ENCODE measurements at regions of chr2 and their contacts with region 1.

Region 1: DNA sequence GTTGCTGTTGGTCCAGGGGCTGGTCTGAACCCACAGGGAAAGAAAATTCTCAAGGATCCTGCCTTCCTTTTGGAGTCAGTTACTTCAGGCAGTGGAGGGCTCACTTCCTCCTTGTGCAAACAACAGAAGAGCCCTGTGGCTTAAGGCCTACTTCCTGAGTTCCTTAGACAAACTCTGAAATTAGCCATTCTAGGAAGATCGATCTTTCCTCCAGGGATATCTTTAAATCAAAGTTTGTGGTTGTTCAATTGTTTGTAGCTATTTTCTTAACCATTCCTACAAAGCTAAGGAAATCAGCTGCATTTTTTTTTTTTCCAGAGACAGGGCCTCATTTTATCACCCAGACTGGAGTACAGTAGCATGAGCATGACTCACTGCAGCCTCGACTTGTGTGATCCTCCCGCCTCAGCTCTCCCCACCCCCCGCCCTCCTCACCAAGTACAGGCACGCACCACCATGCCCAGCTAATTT is 156.0 kb downstream of the TANC1 start:
- DNase-seq: no peak
- H3K4me3 Mint-ChIP-seq: no peak overlapping the region
- H3K27ac Mint-ChIP-seq: peak overlapping the region; percentile 80
- H3K4me1 Mint-ChIP-seq: peaks cover 25% of the 10 kb centered on the region
- H3K27me3 Mint-ChIP-seq: no peaks in the 10 kb centered on the region

Region 2: GRCh38 chr2:158903711-158904443 is 220.6 kb before region 1 on chr2:
- CTCF ChIA-PET with region 1: interaction called, 54 read pairs
- DNase-seq: no peak
- H3K4me3 Mint-ChIP-seq: no peak overlapping the region
- H3K27ac Mint-ChIP-seq: no peak overlapping the region
- H3K4me1 Mint-ChIP-seq: peaks cover 2% of the 10 kb centered on the region
- H3K27me3 Mint-ChIP-seq: peaks cover 11% of the 10 kb centered on the region

Region 3: GRCh38 chr2:159098815-159099455 is 25.5 kb before region 1 on chr2:
- CTCF ChIA-PET with region 1: no interaction called
- DNase-seq: no peak
- H3K4me3 Mint-ChIP-seq: no peak overlapping the region
- H3K27ac Mint-ChIP-seq: no peak overlapping the region
- H3K4me1 Mint-ChIP-seq: peaks cover 27% of the 10 kb centered on the region
- H3K27me3 Mint-ChIP-seq: no peaks in the 10 kb centered on the region

Region 4: DNA sequence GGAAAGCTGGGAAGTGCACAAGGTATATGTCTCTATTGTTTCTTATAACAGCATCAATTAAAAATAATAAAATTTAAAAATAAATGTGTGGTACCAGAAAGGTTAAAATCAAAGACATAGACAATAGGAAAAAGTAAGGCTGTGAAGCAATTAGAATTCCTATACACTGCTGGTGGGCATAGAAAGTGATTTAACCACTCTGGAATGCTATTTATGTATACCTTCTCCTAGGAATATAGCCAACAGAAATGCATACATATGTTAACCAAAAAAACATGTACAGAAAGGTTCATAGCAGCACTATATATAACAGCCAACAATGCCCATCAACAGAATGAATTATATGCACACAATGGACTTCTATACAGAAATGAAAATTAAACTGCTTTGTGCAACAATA is 119.1 kb after region 1 on chr2:
- CTCF ChIA-PET with region 1: no interaction called
- DNase-seq: no peak
- H3K4me3 Mint-ChIP-seq: no peak overlapping the region
- H3K27ac Mint-ChIP-seq: no peak overlapping the region
- H3K4me1 Mint-ChIP-seq: no peaks in the 10 kb centered on the region
- H3K27me3 Mint-ChIP-seq: no peaks in the 10 kb centered on the region

Region 5: DNA sequence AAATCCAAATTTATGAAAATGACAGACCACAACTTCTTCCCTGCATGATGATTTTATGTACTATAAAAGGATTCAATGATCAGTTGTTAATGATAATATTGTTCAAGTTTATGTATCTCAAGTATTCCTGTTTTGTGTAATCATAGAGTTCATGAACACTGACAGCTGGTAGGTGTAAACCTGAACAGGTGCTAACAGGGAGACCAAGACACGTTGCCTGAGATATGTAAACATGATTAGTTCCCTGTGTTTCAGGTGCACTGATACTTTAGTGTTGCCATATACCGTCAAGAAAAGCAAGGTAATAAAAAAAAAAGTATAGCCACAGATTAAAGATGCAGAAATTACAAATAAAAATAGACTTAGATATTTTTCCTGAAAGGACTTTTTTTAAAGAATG is 360.1 kb after region 1 on chr2:
- CTCF ChIA-PET with region 1: no interaction called
- DNase-seq: no peak
- H3K4me3 Mint-ChIP-seq: no peak overlapping the region
- H3K27ac Mint-ChIP-seq: no peak overlapping the region
- H3K4me1 Mint-ChIP-seq: no peaks in the 10 kb centered on the region
- H3K27me3 Mint-ChIP-seq: no peaks in the 10 kb centered on the region

Measured in activated naive CD4-positive, alpha-beta T cell treated with anti-CD3 and anti-CD28 coated beads, Interleukin-2, amount 10 ng/mL, durations not matched to agents 7 days and 5 days (primary cell).